ENCODE measurements at regions of chr2 and their contacts with region 1.

Region 1: DNA sequence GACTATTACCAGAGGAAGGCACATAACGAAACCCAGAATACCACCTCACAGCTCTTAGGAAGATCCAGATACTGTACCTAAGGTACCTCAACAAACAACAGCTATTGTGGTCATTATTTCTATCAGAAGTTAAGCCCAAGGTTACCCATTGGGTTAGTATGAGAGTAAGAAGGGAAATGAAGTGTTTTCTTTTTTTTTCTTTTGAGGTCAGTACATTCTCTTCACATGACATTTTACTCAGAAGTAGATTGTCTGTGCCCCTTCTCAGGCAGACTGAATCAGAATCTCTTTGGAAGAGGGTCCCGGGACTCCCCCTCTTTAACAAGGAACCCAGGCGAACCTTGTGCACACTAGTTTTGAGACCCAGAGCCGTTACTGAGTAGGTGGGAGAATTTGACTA is 233.7 kb upstream of the CXCR4 start:
- DNase-seq: no peak
- H3K4me3 ChIP-seq: no peak overlapping the region
- H3K27ac ChIP-seq: no peak overlapping the region
- H3K4me1 ChIP-seq: no peaks in the 10 kb centered on the region
- H3K27me3 ChIP-seq: no peaks in the 10 kb centered on the region
- CTCF ChIP-seq: no peak
- EP300 ChIP-seq: no peak
- POLR2A ChIP-seq: no peak

Region 2: GRCh38 chr2:135870571-135870970 is 481.1 kb before region 1 on chr2:
- in situ Hi-C with region 1: no loop called
- intact Hi-C with region 1: no loop called
- DNase-seq: no peak
- H3K4me3 ChIP-seq: no peak overlapping the region
- H3K27ac ChIP-seq: no peak overlapping the region
- H3K4me1 ChIP-seq: peaks cover 0 to 16% (median 7%) of the 10 kb centered on the region in 4 donors
- H3K27me3 ChIP-seq: no peaks in the 10 kb centered on the region
- CTCF ChIP-seq: no peak
- EP300 ChIP-seq: no peak
- POLR2A ChIP-seq: no peak

Region 3: GRCh38 chr2:136107051-136108033 is 244.3 kb before region 1 on chr2:
- in situ Hi-C with region 1: no loop called
- intact Hi-C with region 1: no loop called
- DNase-seq: no peak
- H3K4me3 ChIP-seq: no peak overlapping the region
- H3K27ac ChIP-seq: no peak overlapping the region
- H3K4me1 ChIP-seq: no peaks in the 10 kb centered on the region
- H3K27me3 ChIP-seq: peaks cover 3% of the 10 kb centered on the region
- CTCF ChIP-seq: no peak
- EP300 ChIP-seq: no peak
- POLR2A ChIP-seq: no peak

Region 4: DNA sequence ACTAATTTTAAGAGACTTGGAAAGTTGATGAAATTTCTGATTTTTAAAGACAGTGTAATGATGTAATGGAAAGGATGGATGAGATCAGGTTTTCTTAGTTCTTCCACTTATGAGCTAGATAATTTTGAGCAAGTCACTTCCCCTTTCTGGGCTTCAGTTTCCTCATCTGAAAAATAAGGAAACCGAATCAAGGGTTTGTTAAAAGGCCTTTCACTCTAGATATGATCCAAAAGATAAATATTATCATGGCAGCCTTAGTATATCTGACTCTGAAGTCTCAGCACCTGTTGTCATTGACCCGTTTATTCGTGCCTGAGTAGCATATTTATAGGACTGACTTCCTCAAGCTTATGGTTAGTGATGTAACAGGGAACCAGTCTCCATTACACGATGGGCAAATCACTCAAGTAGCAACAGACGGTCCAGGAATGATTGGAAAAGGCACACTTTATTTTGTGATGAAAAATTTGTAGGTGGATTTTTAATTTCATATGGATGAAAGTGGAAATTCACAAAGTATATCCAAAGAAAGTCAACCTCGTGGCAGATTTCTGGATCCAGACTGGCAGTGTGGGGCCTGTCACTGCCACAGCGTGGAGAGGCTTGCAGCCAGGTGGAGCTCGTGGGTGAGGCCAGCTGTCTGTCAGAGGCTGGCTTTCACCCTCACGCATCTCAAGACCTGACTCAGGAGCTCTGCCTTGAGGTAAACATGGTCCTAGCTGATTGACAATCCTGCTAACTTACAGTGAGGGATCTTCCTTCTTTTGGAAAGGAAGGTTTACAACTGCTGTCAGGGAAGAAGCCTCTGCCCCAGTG is 95.8 kb before region 1 on chr2:
- in situ Hi-C with region 1: no loop called
- intact Hi-C with region 1: no loop called
- DNase-seq: no peak
- H3K4me3 ChIP-seq: no peak overlapping the region
- H3K27ac ChIP-seq: no peak overlapping the region
- H3K4me1 ChIP-seq: no peaks in the 10 kb centered on the region
- H3K27me3 ChIP-seq: no peaks in the 10 kb centered on the region
- CTCF ChIP-seq: no peak
- EP300 ChIP-seq: no peak
- POLR2A ChIP-seq: no peak

Region 5: DNA sequence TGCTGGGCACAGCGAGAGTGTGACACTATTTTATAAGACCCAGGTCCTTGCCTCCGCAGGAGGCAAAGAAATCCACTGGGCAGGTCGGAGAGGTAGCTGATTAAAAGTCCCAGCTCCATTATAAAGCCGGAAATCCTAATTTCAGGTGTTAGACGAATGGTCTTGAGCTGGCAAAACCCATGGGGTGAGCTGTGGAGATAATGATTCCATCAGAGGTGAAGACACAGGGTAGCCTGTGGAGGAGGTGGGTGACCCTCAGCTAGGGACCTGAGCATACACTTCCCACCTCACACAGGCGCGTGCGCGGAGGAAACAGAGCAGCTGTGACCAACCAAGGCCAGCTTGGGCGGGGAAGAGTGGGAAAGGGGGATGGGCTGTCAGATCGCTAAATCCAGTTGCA is 32.0 kb before region 1 on chr2:
- in situ Hi-C with region 1: no loop called
- intact Hi-C with region 1: loop called (anchors 2 kb)
- DNase-seq: no peak
- H3K4me3 ChIP-seq: no peak overlapping the region
- H3K27ac ChIP-seq: no peak overlapping the region
- H3K4me1 ChIP-seq: no peaks in the 10 kb centered on the region
- H3K27me3 ChIP-seq: no peaks in the 10 kb centered on the region
- CTCF ChIP-seq: no peak
- EP300 ChIP-seq: no peak
- POLR2A ChIP-seq: no peak

Measured in transverse colon (tissue), 4 donors.